ENCODE measurements at regions of chr5 and their contacts with region 1.

Region 1: DNA sequence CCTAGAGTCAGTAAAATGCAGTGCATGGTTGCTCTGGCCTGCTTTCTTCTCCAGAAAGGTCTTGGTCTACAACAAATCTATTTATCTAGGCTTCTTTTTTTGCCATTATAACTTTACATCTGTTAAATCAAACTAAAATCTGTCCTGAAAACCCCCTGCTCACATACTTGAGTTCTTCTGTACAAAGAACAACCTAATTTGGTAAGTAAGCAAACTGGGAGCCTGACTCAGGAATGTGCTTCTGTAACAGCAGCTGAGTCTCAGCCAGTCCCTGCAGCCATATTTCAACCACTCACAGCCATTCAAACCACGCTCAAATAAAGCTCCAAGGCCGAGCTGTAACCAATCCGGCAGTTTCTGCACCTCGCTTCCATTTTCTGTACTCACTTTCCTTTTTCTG is 95.8 kb downstream of the PLPP1 start:
- DNase-seq: no peak
- H3K4me3 Mint-ChIP-seq: no peak overlapping the region
- H3K27ac Mint-ChIP-seq: peak overlapping the region; percentile 64
- H3K4me1 Mint-ChIP-seq: peaks cover 31% of the 10 kb centered on the region
- H3K27me3 Mint-ChIP-seq: no peaks in the 10 kb centered on the region

Region 2: DNA sequence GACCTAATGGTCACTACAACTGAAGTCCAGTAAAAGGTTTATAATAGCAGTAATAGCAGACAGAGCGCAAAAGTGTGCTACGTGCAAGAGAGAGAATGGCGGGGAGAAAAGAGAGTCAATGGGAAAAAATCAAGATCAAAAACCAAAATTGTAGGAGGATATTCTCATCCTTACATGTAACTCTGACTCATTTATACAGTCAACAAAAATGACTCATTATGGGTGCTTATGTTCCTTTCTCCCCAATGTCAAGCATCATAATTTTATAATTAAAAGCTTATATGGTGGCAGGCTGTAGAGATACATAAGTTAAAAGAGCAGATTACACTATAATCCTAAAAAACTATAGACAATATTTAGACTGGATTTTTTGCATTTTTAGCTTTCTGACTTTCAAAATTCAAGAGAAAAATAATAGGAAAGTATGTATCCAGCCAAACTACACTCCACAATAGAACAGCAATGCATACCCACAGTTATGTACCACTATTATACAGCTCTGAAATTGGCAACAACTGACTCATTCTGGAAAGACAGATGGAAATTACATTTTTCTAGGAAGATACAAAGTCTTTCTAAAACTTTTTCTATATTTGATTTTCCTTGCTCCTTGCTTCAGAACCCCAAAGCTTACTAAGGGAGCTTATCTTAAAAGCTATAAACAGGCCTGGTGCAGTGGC is 17.3 kb after region 1 on chr5:
- intact Hi-C with region 1: loop called (anchors 2 kb)
- DNase-seq: no peak
- H3K4me3 Mint-ChIP-seq: no peak overlapping the region
- H3K27ac Mint-ChIP-seq: peak overlapping the region; percentile 45
- H3K4me1 Mint-ChIP-seq: peaks cover 15% of the 10 kb centered on the region
- H3K27me3 Mint-ChIP-seq: no peaks in the 10 kb centered on the region

Measured in activated CD4-positive, alpha-beta T cell treated with anti-CD3 and anti-CD28 coated beads, Interleukin-2, amount 10 ng/mL, durations not matched to agents 24 days and 14 days (primary cell).